Body of pancreas (tissue), 4 donors: ENCODE measurements at regions of chr1 and their contacts with region 1.

Region 1: GRCh38 chr1:115138968-115139367 is 49.7 kb upstream of the TSPAN2 start:
- DNase-seq: peak; percentile 87 to 92 (median 90)
- ATAC-seq: peak; percentile 95
- H3K4me3 ChIP-seq: no peak overlapping the region
- H3K27ac ChIP-seq: no peak overlapping the region
- H3K4me1 ChIP-seq: no peaks in the 10 kb centered on the region
- H3K27me3 ChIP-seq: no peaks in the 10 kb centered on the region
- CTCF ChIP-seq: peak; percentile 84 to 96 (median 93)
- POLR2A ChIP-seq: no peak

Region 2: DNA sequence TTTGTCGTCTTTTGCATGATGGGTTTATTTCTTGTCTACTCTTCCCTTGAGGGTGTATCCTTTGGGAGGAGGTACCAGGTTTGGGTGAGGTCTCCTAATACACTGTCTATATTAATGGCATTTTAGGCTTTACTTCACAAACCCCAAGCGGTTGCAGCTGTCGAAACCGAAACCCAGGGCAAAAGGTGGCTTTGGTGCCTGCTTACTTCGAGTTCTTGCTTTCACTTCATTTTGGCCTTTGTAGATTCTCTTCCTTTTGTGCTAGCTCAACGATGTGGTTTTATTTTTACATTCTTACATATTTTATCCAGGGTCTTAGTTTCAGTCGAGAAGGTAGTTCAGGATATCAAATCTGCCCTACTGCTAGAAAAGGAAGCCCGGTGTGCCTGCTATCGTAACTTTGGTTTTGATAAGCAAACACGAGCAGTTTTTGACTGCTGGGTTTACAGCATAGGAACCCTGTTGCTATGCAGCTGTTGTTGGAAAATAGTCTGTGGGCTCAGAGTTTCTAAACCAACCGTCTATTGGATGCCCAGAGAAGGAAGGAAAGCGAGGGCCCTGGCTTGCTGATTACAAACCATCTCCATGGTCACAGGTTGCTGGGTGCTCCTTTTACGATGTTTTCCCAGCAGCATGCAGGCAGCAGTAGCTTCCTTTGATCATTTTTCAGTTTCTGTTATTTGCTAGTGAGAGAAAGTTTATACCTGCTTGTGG is 39.8 kb before region 1 on chr1:
- intact Hi-C with region 1: no loop called
- DNase-seq: peak in 3 of 4 donors; percentile 35 to 51 (median 41)
- ATAC-seq: peak; percentile 68
- H3K4me3 ChIP-seq: no peak overlapping the region
- H3K27ac ChIP-seq: peak overlapping the region in 2 of 4 donors; percentile 28 to 29
- H3K4me1 ChIP-seq: no peaks in the 10 kb centered on the region
- H3K27me3 ChIP-seq: no peaks in the 10 kb centered on the region
- CTCF ChIP-seq: no peak
- POLR2A ChIP-seq: peak in 1 of 3 donors; percentile 13

Region 3: GRCh38 chr1:115469703-115470476 is 330.9 kb after region 1 on chr1:
- intact Hi-C with region 1: loop called (anchors 5 kb)
- DNase-seq: peak; percentile 44 to 68 (median 59)
- ATAC-seq: peak; percentile 75
- H3K4me3 ChIP-seq: no peak overlapping the region
- H3K27ac ChIP-seq: no peak overlapping the region
- H3K4me1 ChIP-seq: no peaks in the 10 kb centered on the region
- H3K27me3 ChIP-seq: no peaks in the 10 kb centered on the region
- CTCF ChIP-seq: peak; percentile 81 to 95 (median 89)
- POLR2A ChIP-seq: no peak

Region 4: DNA sequence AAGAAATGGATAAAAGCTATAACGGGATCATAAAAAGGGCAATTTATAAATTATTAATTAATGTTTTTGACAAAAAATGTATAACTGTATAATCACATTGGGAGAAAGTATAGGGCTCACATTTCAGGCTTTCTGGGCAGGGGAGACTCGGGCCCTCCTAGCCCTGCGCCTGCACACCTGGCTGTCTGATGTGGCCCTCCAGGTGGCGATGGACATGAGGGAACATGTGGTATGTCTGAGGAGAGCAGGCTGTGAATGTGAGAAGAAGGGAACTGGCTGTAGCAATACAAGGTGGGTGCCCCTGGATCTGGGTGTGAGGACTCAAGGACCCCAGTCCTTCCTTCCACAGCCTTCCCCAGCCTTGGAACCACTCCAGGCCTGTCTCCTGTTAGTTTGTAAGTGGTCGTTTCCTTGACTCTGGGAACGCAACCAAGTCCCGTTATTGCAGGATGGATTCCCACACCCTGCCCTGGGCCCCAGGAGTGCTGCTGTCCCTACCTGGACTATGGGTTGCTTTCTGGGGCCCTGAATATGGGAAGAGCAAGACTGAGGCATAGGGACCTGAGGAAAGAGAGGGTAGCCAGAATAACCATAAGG is 455.5 kb after region 1 on chr1:
- intact Hi-C with region 1: loop called (anchors 5 kb)
- DNase-seq: no peak
- ATAC-seq: no peak
- H3K4me3 ChIP-seq: no peak overlapping the region
- H3K27ac ChIP-seq: no peak overlapping the region
- H3K4me1 ChIP-seq: no peaks in the 10 kb centered on the region
- H3K27me3 ChIP-seq: no peaks in the 10 kb centered on the region
- CTCF ChIP-seq: no peak
- POLR2A ChIP-seq: no peak